Activated CD8-positive, alpha-beta T cell treated with anti-CD3 and anti-CD28 coated beads, Interleukin-2, amount 10 ng/mL, durations not matched to agents 7 days and 5 days (primary cell): ENCODE measurements at regions of chr10 and their contacts with region 1.

Region 1: GRCh38 chr10:98170249-98171117 is 36.0 kb downstream of the R3HCC1L start:
- DNase-seq: peak; percentile 50
- ATAC-seq: peak; percentile 75
- H3K4me3 Mint-ChIP-seq: no peak overlapping the region
- H3K27ac Mint-ChIP-seq: no peak overlapping the region
- H3K4me1 Mint-ChIP-seq: no peaks in the 10 kb centered on the region
- H3K27me3 Mint-ChIP-seq: no peaks in the 10 kb centered on the region

Region 2: GRCh38 chr10:98125940-98126631 is 44.4 kb before region 1 on chr10:
- CTCF ChIA-PET with region 1: no interaction called
- POLR2A ChIA-PET with region 1: no interaction called
- DNase-seq: no peak
- ATAC-seq: no peak
- H3K4me3 Mint-ChIP-seq: no peak overlapping the region
- H3K27ac Mint-ChIP-seq: no peak overlapping the region
- H3K4me1 Mint-ChIP-seq: no peaks in the 10 kb centered on the region
- H3K27me3 Mint-ChIP-seq: peaks cover 23% of the 10 kb centered on the region

Region 3: DNA sequence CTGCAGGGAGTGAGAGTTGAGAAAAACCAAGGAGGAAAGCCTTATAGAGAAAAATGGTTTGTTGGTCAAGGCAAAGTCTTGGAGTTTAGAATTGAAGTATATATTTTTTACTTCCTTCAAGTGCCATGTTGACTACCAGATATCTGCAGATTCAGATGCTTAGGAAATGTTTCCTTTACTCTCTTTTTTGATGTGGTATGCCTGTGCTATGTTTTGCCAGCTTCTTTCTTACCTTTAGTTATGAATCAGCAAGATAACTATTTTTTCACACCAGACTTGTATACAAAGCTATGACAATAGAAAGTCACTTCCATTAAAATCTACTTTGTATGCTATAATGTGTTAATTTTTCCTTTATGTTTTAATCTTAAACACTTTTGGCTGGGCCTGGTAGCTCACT is 32.5 kb before region 1 on chr10:
- CTCF ChIA-PET with region 1: interaction called, 13 read pairs
- POLR2A ChIA-PET with region 1: interaction called, 6 read pairs
- DNase-seq: no peak
- ATAC-seq: no peak
- H3K4me3 Mint-ChIP-seq: no peak overlapping the region
- H3K27ac Mint-ChIP-seq: peak overlapping the region; percentile 7
- H3K4me1 Mint-ChIP-seq: peaks cover 65% of the 10 kb centered on the region
- H3K27me3 Mint-ChIP-seq: no peaks in the 10 kb centered on the region

Region 4: GRCh38 chr10:98186681-98187080 is 16.2 kb after region 1 on chr10:
- CTCF ChIA-PET with region 1: interaction called, 12 read pairs
- POLR2A ChIA-PET with region 1: no interaction called
- DNase-seq: no peak
- ATAC-seq: no peak
- H3K4me3 Mint-ChIP-seq: no peak overlapping the region
- H3K27ac Mint-ChIP-seq: no peak overlapping the region
- H3K4me1 Mint-ChIP-seq: peaks cover 13% of the 10 kb centered on the region
- H3K27me3 Mint-ChIP-seq: no peaks in the 10 kb centered on the region

Region 5: DNA sequence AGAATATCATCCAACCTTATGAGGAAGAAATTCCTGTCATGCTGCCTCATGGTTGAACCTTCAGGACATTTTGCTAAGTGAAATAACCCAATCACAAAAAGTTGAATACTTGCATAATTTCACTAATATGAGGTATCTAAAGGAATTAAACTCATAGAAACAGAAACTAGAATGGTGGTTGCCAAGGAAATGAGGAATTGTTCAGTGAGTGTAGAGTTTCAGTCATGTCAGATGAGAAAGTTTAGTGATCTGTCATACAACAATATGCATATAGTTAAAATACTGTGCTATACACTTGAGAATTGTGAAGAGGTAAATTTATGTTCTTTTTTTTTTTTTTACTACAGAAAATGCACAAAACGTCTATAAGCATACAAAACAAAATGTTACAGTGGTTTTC is 24.6 kb after region 1 on chr10:
- CTCF ChIA-PET with region 1: interaction called, 13 read pairs
- POLR2A ChIA-PET with region 1: no interaction called
- DNase-seq: no peak
- ATAC-seq: no peak
- H3K4me3 Mint-ChIP-seq: no peak overlapping the region
- H3K27ac Mint-ChIP-seq: no peak overlapping the region
- H3K4me1 Mint-ChIP-seq: peaks cover 5% of the 10 kb centered on the region
- H3K27me3 Mint-ChIP-seq: no peaks in the 10 kb centered on the region

Region 6: GRCh38 chr10:98269072-98269912 is 98.8 kb after region 1 on chr10:
- CTCF ChIA-PET with region 1: no interaction called
- POLR2A ChIA-PET with region 1: no interaction called
- DNase-seq: no peak
- ATAC-seq: no peak
- H3K4me3 Mint-ChIP-seq: no peak overlapping the region
- H3K27ac Mint-ChIP-seq: no peak overlapping the region
- H3K4me1 Mint-ChIP-seq: peaks cover 4% of the 10 kb centered on the region
- H3K27me3 Mint-ChIP-seq: peaks cover 39% of the 10 kb centered on the region

Region 7: GRCh38 chr10:98309366-98310355 is 139.2 kb after region 1 on chr10:
- CTCF ChIA-PET with region 1: interaction called, 29 read pairs
- POLR2A ChIA-PET with region 1: interaction called, 4 read pairs
- DNase-seq: peak; percentile 22
- ATAC-seq: peak; percentile 44
- H3K4me3 Mint-ChIP-seq: no peak overlapping the region
- H3K27ac Mint-ChIP-seq: no peak overlapping the region
- H3K4me1 Mint-ChIP-seq: no peaks in the 10 kb centered on the region
- H3K27me3 Mint-ChIP-seq: peaks cover 26% of the 10 kb centered on the region